Heart right ventricle (tissue), 16 donors: ENCODE measurements at regions of chr12 and their contacts with region 1.

Region 1: GRCh38 chr12:49188914-49189367 is at the start of gene TUBA1A:
- DNase-seq: peak; percentile 86 to 96
- ATAC-seq: peak; percentile 91 to 95 (median 93)
- H3K4me3 ChIP-seq: peak within 1 kb of the TSS; percentile 60 to 98 (median 87)
- H3K27ac ChIP-seq: peak within 1 kb of the TSS; percentile 90 to 100 (median 99)
- H3K4me1 ChIP-seq: peaks cover 5 to 33% (median 30%) of the 10 kb centered on the region in 9 donors
- H3K27me3 ChIP-seq: no peaks in the 10 kb centered on the region
- CTCF ChIP-seq: peak in 1 of 9 donors; percentile 16
- total RNA-seq, gene TUBA1A: 93.9 to 258 (median 134) TPM

Region 2: GRCh38 chr12:49069507-49070346 is 119.2 kb before region 1 on chr12 and contains the start of gene RHEBL1:
- intact Hi-C with region 1: loop called in 2 of 10 experiments (anchors 5 to 10 kb)
- DNase-seq: peak; percentile 97 to 99
- ATAC-seq: peak; percentile 100
- H3K4me3 ChIP-seq: peak within 1 kb of the TSS; percentile 51 to 86 (median 68)
- H3K27ac ChIP-seq: peak within 1 kb of the TSS in 7 of 10 donors; percentile 30 to 74 (median 59)
- H3K4me1 ChIP-seq: peaks cover 7 to 18% (median 12%) of the 10 kb centered on the region in 9 donors
- H3K27me3 ChIP-seq: no peaks in the 10 kb centered on the region
- CTCF ChIP-seq: no peak
- total RNA-seq, gene RHEBL1: 0.23 to 1.9 (median 0.41) TPM in 8 of 10 donors, not detected in the others

Region 3: GRCh38 chr12:49130151-49131050 is 58.5 kb before region 1 on chr12:
- intact Hi-C with region 1: loop called (anchors 1 to 10 kb)
- DNase-seq: peak; percentile 95
- ATAC-seq: peak; percentile 86 to 94 (median 90)
- H3K4me3 ChIP-seq: peak overlapping the region; percentile 66 to 98 (median 86)
- H3K27ac ChIP-seq: peak overlapping the region; percentile 94 to 100 (median 99)
- H3K4me1 ChIP-seq: peaks cover 4 to 42% (median 31%) of the 10 kb centered on the region in 9 donors
- H3K27me3 ChIP-seq: no peaks in the 10 kb centered on the region
- CTCF ChIP-seq: peak; percentile 74 to 98 (median 93)

Region 4: DNA sequence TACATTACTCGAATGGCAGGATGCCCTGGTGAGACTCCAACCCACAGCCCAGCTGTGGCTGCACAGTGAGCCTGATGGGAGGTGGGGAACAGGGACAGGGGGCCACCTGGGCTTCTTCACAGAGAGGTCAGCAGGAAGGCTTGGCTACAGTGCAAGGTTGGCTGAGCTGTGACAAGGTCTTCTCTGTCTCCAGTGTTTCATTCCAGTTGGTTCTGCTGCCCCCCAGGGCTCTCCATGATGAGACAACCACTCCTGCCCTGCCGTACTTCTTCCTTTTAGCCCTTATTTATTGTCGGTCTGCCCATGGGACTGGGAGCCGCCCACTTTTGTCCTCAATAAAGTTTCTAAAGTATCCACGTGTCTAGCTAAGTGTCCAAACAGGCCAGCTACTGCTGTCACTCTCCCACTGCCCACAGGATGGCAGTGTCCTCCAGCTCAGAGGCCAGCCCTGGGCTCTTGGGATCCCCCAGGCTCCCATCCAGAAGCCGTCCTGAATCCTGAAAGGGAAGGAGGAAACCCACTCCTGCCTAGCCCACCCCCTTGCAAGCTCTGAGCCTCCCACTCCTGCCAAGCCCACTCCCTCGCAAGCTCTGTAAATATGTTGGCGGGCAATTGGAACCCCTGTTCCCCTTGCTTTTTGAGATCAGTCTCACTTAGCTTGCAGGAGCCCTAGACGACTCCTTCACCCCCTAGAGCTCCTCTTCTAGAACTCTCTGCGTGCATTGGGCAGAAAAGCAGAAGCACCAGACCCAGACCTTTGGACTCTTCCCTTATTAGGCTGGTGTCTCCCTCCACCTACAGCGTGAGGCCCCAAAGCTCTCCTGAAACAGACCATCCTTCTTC is 142.7 kb after region 1 on chr12:
- intact Hi-C with region 1: no loop called
- DNase-seq: peak; percentile 61
- ATAC-seq: peak; percentile 76 to 92 (median 86)
- H3K4me3 ChIP-seq: no peak overlapping the region
- H3K27ac ChIP-seq: no peak overlapping the region
- H3K4me1 ChIP-seq: peaks cover 0 to 32% (median 6%) of the 10 kb centered on the region in 9 donors
- H3K27me3 ChIP-seq: peaks cover 18 to 58% (median 43%) of the 10 kb centered on the region in 7 donors
- CTCF ChIP-seq: peak; percentile 56 to 87 (median 77)